WTC11 (cell line): ENCODE measurements at regions of chr9 and their contacts with region 1.

Region 1: GRCh38 chr9:129626079-129626624 is at the start of gene NTMT1:
- DNase-seq: peak; percentile 84
- ATAC-seq: peak; percentile 49
- H3K4me3 Mint-ChIP-seq: peak within 1 kb of the TSS; percentile 85
- H3K27ac Mint-ChIP-seq: peak within 1 kb of the TSS; percentile 65
- H3K4me1 Mint-ChIP-seq: peaks cover 50% of the 10 kb centered on the region
- H3K27me3 Mint-ChIP-seq: peaks cover 18% of the 10 kb centered on the region
- CTCF ChIP-seq: no peak
- total RNA-seq, gene NTMT1: 55.4 to 71.1 TPM (median 58.1 TPM) in 3 replicates

Region 2: GRCh38 chr9:129145822-129146292 is 480.3 kb before region 1 on chr9:
- CTCF ChIA-PET with region 1: interaction called, 60 read pairs
- POLR2A ChIA-PET with region 1: interaction called, 3 read pairs
- DNase-seq: peak; percentile 60
- ATAC-seq: peak; percentile 57
- H3K4me3 Mint-ChIP-seq: no peak overlapping the region
- H3K27ac Mint-ChIP-seq: peak overlapping the region; percentile 87
- H3K4me1 Mint-ChIP-seq: peaks cover 54% of the 10 kb centered on the region
- H3K27me3 Mint-ChIP-seq: no peaks in the 10 kb centered on the region
- CTCF ChIP-seq: no peak

Region 3: DNA sequence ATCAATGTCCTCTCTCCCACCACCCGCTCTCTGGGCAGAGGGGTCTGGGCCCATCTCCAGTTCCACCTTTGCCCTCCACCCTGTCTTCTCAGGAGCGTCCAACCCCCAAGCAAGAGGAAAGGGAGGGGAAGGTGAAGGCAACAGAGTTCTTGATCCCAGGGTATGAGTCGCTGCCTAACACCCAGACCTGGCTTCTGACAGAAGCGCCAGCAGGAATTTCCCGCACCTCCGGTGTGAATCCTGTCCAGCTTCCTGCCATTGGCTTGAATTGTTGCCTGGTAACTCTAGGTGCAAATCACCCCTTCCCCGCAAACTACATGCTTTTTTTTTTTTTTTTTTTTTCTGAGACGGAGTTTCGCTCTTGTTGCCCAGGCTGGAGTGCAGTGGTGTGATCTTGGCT is 363.9 kb before region 1 on chr9:
- CTCF ChIA-PET with region 1: no interaction called
- POLR2A ChIA-PET with region 1: no interaction called
- DNase-seq: no peak
- ATAC-seq: no peak
- H3K4me3 Mint-ChIP-seq: no peak overlapping the region
- H3K27ac Mint-ChIP-seq: no peak overlapping the region
- H3K4me1 Mint-ChIP-seq: peaks cover 34% of the 10 kb centered on the region
- H3K27me3 Mint-ChIP-seq: peaks cover 51% of the 10 kb centered on the region
- CTCF ChIP-seq: no peak

Region 4: DNA sequence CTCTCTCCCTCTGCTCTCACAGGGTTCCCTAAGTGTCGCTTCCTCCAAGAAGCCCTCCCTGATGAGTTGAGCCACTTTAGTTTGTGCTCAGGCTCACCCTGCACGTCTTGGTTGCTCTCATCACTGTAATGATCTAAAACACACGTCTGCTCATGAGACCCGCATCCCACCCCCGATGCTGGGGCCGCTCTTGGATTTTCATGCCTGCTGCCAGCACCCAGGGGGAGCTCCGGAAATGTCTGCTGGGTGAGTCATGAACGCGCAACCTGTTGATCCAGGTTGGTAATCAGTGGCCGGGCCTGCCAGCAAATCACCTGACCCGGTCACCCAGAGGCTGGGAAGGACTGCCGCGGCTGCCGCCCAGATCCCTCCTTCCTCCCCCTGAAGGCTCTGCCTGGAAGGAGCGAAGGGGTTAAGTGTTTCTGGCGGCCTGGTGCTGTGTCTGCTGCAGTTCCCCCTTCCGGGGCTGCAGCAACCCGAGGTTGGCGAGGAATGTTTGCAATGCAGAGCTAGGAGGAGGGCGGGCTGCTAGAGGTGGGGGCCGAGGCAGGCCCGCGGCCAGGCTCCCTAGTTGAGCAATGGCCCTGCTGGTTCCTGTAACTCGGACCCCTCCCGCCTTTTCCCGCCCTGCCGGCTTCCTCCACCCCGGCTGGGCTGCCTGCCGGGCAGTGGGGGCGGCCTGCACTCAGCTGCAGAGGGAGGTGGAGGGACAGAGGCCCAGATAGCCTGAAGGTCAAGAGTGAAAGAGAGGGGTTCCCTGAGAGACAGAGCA is 292.0 kb before region 1 on chr9:
- CTCF ChIA-PET with region 1: interaction called, 11 read pairs
- POLR2A ChIA-PET with region 1: interaction called, 3 read pairs
- DNase-seq: peak; percentile 91
- ATAC-seq: peak; percentile 82
- H3K4me3 Mint-ChIP-seq: peak overlapping the region; percentile 57
- H3K27ac Mint-ChIP-seq: peak overlapping the region; percentile 100
- H3K4me1 Mint-ChIP-seq: peaks cover 43% of the 10 kb centered on the region
- H3K27me3 Mint-ChIP-seq: 0 out of 2 replicates have a peak, but pooled peaks cover 4% of the 10 kb centered on the region
- CTCF ChIP-seq: no peak

Region 5: GRCh38 chr9:129495534-129496325 is 130.4 kb before region 1 on chr9:
- CTCF ChIA-PET with region 1: interaction called, 26 read pairs
- POLR2A ChIA-PET with region 1: interaction called, 6 read pairs
- DNase-seq: peak; percentile 97
- ATAC-seq: peak; percentile 77
- H3K4me3 Mint-ChIP-seq: peak overlapping the region; percentile 89
- H3K27ac Mint-ChIP-seq: peak overlapping the region; percentile 74; the same call in 1 of the 2 replicates
- H3K4me1 Mint-ChIP-seq: peaks cover 58% of the 10 kb centered on the region
- H3K27me3 Mint-ChIP-seq: peaks cover 61% of the 10 kb centered on the region
- CTCF ChIP-seq: no peak

Region 6: DNA sequence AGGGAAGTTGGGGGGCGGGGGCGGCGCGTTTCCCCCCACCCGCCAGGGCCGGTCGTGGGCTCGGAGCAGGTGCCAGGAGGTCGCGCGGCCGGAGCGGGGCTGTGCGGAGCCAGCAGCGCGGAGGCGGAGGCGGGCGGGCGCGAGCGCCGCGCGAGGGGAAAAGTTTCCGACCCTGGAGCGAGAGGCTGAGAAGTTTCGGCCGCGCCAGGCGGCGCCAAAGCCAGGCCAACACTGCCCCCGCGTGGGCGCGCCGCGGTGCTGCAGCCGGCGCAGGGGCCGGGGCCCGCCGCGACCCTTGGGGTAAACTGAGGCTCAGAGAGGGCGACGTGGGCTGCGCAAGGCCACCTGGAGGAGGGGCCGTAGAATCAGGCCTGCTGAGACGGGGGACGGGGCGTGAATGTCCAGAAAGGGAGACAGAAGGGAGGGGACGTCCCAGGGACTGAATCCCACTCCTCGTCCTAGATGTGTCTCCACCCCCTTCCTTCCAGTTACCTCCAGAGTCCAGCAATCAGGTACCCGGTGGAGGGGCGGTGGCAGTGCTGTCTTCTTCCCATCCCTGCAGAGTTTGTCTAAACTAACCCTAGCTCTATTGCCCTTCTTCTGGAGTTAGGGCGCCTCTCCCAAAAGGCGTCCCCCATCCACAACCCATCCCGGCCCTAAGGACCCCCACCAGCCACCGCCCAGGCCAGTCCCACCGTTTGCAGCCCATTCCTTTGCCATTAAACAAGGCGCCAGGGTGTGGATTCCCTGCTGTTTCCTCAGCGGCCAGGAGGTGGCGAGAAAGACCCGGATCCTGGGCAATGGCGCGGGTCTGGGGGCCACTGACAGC is 15.5 kb before region 1 on chr9:
- CTCF ChIA-PET with region 1: interaction called, 65 read pairs
- POLR2A ChIA-PET with region 1: interaction called, 4 read pairs
- DNase-seq: peak; percentile 94
- ATAC-seq: peak; percentile 61
- H3K4me3 Mint-ChIP-seq: peak overlapping the region; percentile 72
- H3K27ac Mint-ChIP-seq: peak overlapping the region; percentile 74; the same call in 1 of the 2 replicates
- H3K4me1 Mint-ChIP-seq: peaks cover 24% of the 10 kb centered on the region
- H3K27me3 Mint-ChIP-seq: peaks cover 11% of the 10 kb centered on the region
- CTCF ChIP-seq: peak; percentile 92

Region 7: GRCh38 chr9:129720181-129720864 is 94.2 kb after region 1 on chr9:
- CTCF ChIA-PET with region 1: interaction called, 10 read pairs
- POLR2A ChIA-PET with region 1: no interaction called
- DNase-seq: peak; percentile 85
- ATAC-seq: peak; percentile 91
- H3K4me3 Mint-ChIP-seq: no peak overlapping the region
- H3K27ac Mint-ChIP-seq: no peak overlapping the region
- H3K4me1 Mint-ChIP-seq: no peaks in the 10 kb centered on the region
- H3K27me3 Mint-ChIP-seq: peaks cover 3% of the 10 kb centered on the region; the same call in 1 of the 2 replicates
- CTCF ChIP-seq: peak; percentile 68

Region 8: GRCh38 chr9:129796029-129796910 is 170.1 kb after region 1 on chr9:
- CTCF ChIA-PET with region 1: interaction called, 17 read pairs
- POLR2A ChIA-PET with region 1: no interaction called
- DNase-seq: no peak
- ATAC-seq: no peak
- H3K4me3 Mint-ChIP-seq: no peak overlapping the region
- H3K27ac Mint-ChIP-seq: no peak overlapping the region
- H3K4me1 Mint-ChIP-seq: no peaks in the 10 kb centered on the region
- H3K27me3 Mint-ChIP-seq: 0 out of 2 replicates have a peak, but pooled peaks cover 6% of the 10 kb centered on the region
- CTCF ChIP-seq: no peak